Activated B cell treated with CpG ODN at 0.5 μM for 24 hours (primary cell): ENCODE measurements at regions of chr7 and their contacts with region 1.

Region 1: GRCh38 chr7:23597094-23598091 is at the start of gene CCDC126:
- DNase-seq: peak; percentile 84
- ATAC-seq: peak; percentile 72
- H3K4me3 Mint-ChIP-seq: peak within 1 kb of the TSS; percentile 89
- H3K27ac Mint-ChIP-seq: peak within 1 kb of the TSS; percentile 51
- H3K4me1 Mint-ChIP-seq: peaks cover 58% of the 10 kb centered on the region
- H3K27me3 Mint-ChIP-seq: no peaks in the 10 kb centered on the region
- CTCF ChIP-seq: no peak
- total RNA-seq, gene CCDC126: 13.7 and 15.7 TPM in 2 replicates

Region 2: GRCh38 chr7:23105644-23106056 is 491.7 kb before region 1 on chr7 and contains the start of gene KLHL7:
- CTCF ChIA-PET with region 1: no interaction called
- POLR2A ChIA-PET with region 1: no interaction called
- intact Hi-C with region 1: loop called (anchors 2 kb)
- DNase-seq: peak; percentile 98
- ATAC-seq: peak; percentile 95
- H3K4me3 Mint-ChIP-seq: peak within 1 kb of the TSS; percentile 94
- H3K27ac Mint-ChIP-seq: peak within 1 kb of the TSS; percentile 97
- H3K4me1 Mint-ChIP-seq: peaks cover 32% of the 10 kb centered on the region
- H3K27me3 Mint-ChIP-seq: no peaks in the 10 kb centered on the region
- CTCF ChIP-seq: no peak
- total RNA-seq, gene KLHL7: 12.2 and 13.4 TPM in 2 replicates

Region 3: GRCh38 chr7:23373151-23374004 is 224.0 kb before region 1 on chr7:
- CTCF ChIA-PET with region 1: no interaction called
- POLR2A ChIA-PET with region 1: no interaction called
- intact Hi-C with region 1: loop called (anchors 5 kb)
- DNase-seq: peak; percentile 28
- ATAC-seq: peak; percentile 69
- H3K4me3 Mint-ChIP-seq: peak overlapping the region; percentile 68
- H3K27ac Mint-ChIP-seq: peak overlapping the region; percentile 94
- H3K4me1 Mint-ChIP-seq: peaks cover 70% of the 10 kb centered on the region
- H3K27me3 Mint-ChIP-seq: no peaks in the 10 kb centered on the region
- CTCF ChIP-seq: no peak

Region 4: DNA sequence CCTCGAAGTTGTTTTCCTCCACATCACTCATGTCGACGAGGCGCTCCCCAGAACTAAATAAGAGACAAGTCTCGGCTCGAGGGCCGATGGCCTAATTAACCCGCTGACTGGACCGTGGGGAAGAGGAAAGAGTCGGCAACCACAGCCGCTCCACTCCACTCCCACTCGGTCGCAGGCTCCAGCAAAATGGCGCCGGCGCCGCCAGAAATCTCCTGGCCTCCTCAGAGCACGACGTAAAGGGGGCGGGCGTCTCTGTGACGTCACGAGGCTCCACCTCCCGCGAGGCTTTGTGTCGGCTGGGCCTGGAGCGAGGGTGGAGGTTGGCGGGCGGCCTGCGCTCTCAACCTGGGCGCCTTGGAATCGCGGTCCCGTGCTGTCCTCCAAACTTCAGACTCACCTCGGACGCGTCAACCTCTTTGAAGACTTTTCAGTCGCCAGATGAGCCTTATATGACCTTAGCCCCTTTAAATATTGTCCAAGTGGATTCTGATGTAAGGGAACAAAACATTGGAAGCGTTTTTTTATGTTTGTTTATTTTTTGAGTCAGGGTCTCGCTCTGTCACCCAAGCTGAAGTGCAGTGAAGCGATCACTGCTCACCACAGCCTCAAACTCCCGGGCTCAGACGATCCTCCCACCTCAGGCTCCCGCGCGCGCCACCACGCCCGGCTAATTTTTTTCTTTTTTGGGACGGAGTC is 65.5 kb before region 1 on chr7 and contains the start of gene TRA2A:
- CTCF ChIA-PET with region 1: no interaction called
- POLR2A ChIA-PET with region 1: interaction called, 5 read pairs
- intact Hi-C with region 1: loop called (anchors 1 kb)
- DNase-seq: peak; percentile 97
- ATAC-seq: peak; percentile 89
- H3K4me3 Mint-ChIP-seq: peak within 1 kb of the TSS; percentile 99
- H3K27ac Mint-ChIP-seq: peak within 1 kb of the TSS; percentile 100
- H3K4me1 Mint-ChIP-seq: peaks cover 49% of the 10 kb centered on the region
- H3K27me3 Mint-ChIP-seq: no peaks in the 10 kb centered on the region
- CTCF ChIP-seq: no peak
- total RNA-seq, gene TRA2A: 123 and 144 TPM in 2 replicates

Region 5: DNA sequence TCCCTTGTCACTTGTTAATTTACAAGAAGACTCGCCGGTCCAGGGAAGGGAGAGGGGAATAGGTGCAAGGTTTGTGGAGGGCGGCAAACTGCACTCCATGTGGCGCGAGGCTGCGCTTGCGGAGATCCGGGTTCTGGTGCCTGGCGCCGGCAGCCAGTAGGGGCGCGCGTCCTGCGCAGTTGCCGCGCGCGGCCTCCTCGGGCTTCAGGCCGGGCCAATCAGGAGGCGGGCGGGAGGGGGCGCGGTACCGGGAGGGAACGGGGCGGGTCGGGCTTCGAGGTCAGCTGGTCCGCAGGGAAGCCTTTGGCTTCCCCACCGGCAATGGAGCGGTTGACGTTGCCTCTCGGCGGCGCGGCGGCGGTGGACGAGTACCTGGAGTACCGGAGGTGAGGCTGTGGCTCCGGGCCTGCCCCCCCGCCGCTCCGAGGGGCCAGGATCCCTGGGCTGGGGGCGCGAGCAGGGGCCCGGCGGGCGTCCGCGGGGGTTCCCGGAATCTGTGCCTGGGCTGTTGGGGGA is 82.6 kb after region 1 on chr7 and contains the start of gene FAM221A:
- CTCF ChIA-PET with region 1: interaction called, 14 read pairs
- POLR2A ChIA-PET with region 1: interaction called, 9 read pairs
- intact Hi-C with region 1: loop called (anchors 1 kb)
- DNase-seq: peak; percentile 68
- ATAC-seq: peak; percentile 99
- H3K4me3 Mint-ChIP-seq: peak within 1 kb of the TSS; percentile 90
- H3K27ac Mint-ChIP-seq: peak within 1 kb of the TSS; percentile 43
- H3K4me1 Mint-ChIP-seq: peaks cover 20% of the 10 kb centered on the region
- H3K27me3 Mint-ChIP-seq: no peaks in the 10 kb centered on the region
- CTCF ChIP-seq: no peak
- total RNA-seq, gene FAM221A: 6.5 and 8.3 TPM in 2 replicates

Region 6: GRCh38 chr7:24979863-24980533 is 1382.6 kb after region 1 on chr7 and contains the start of gene OSBPL3:
- CTCF ChIA-PET with region 1: no interaction called
- POLR2A ChIA-PET with region 1: no interaction called
- intact Hi-C with region 1: loop called (anchors 5 kb)
- DNase-seq: peak; percentile 92
- ATAC-seq: peak; percentile 90
- H3K4me3 Mint-ChIP-seq: peak within 1 kb of the TSS; percentile 98
- H3K27ac Mint-ChIP-seq: peak within 1 kb of the TSS; percentile 94
- H3K4me1 Mint-ChIP-seq: peaks cover 53% of the 10 kb centered on the region
- H3K27me3 Mint-ChIP-seq: no peaks in the 10 kb centered on the region
- CTCF ChIP-seq: no peak
- total RNA-seq, gene OSBPL3: 29.3 and 33.3 TPM in 2 replicates